ENCODE measurements at regions of chr2 and their contacts with region 1.

Region 1: DNA sequence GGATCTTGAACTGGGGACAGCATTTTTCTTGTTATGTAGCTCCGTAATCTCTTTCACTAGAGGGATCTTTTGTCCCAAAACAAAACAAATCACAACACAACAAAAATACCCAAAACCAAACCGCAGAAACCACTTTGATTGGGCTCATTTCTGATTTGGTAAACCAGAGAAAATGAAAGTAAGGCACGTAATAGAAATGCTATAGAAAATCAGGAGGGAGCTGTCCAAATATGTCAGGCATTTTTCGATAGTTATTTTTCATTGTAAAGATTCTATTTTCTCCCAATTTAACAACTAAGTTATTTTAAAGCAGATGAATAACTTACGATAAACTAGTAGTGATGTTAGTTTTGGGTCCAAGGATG is 406.5 kb downstream of the XIRP2 start:
- DNase-seq: no peak
- H3K4me3 ChIP-seq: no peak overlapping the region
- H3K27ac ChIP-seq: no peak overlapping the region
- H3K4me1 ChIP-seq: no peaks in the 10 kb centered on the region
- H3K27me3 ChIP-seq: no peaks in the 10 kb centered on the region
- CTCF ChIP-seq: no peak

Region 2: GRCh38 chr2:167157523-167157922 is 137.2 kb before region 1 on chr2:
- CTCF ChIA-PET with region 1: interaction called, 20 read pairs
- POLR2A ChIA-PET with region 1: no interaction called
- intact Hi-C with region 1: no loop called
- DNase-seq: no peak
- H3K4me3 ChIP-seq: no peak overlapping the region
- H3K27ac ChIP-seq: no peak overlapping the region
- H3K4me1 ChIP-seq: no peaks in the 10 kb centered on the region
- H3K27me3 ChIP-seq: no peaks in the 10 kb centered on the region
- CTCF ChIP-seq: no peak